Naive thymus-derived CD8-positive, alpha-beta T cell (primary cell): ENCODE measurements at regions of chr19 and their contacts with region 1.

Region 1: GRCh38 chr19:1241417-1242095 is at the start of gene ATP5F1D:
- DNase-seq: peak; percentile 79 to 93 (median 86)
- ATAC-seq: peak; percentile 64 to 66
- H3K4me3 Mint-ChIP-seq: peak within 1 kb of the TSS; percentile 79 to 96 (median 88)
- H3K27ac Mint-ChIP-seq: peak within 1 kb of the TSS; percentile 86 to 98 (median 94)
- H3K4me1 Mint-ChIP-seq: peaks cover 13 to 48% (median 44%) of the 10 kb centered on the region in 4 donors
- H3K27me3 Mint-ChIP-seq: peaks cover 2 to 9% (median 7%) of the 10 kb centered on the region in 5 donors
- polyA plus RNA-seq, gene ATP5F1D: 214 to 264 (median 262) TPM

Region 2: DNA sequence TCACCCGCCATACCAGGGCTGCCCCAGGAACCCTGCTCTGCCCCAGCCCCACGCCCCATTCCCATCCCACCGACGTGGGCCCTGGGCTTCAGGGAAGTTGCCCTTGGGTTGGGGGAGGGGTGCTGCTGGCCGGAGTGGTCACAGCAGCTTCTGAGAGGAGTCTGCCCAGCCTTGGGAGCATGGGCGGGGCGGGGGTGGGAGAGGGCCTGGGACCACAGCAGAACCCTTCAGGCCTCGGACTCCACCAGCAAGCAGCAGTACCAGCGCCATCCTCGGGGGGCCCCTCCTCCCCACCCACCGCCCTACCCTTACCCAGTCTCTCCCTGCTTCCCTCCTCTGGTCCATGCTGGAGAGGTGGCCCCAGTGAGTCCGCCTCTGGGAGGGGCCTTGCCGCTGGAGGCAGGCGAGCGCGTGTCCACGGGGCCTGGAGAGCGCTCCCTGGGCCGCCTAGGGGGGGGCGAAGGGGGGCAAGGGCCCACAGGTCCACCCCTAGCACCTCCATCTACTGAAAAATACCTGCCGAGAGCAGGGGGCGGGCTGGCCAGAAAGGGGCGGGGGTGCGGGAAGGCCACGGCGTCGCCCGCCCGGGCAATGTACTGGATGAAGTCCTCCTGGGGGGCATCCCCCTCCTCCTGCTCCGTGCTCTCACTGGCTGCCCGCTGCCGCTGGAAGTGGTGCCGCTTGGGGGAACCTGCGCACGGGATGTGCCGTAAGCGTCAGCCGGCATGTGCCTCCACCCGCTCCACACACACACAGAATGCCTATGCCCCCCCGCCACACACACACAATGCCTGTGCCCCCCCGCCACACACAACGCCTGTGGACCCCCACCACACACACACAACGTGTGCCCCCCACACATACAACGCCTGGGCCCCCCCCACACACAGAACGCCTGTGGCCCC is 10.7 kb before region 1 on chr19:
- POLR2A ChIA-PET with region 1: no interaction called
- DNase-seq: no peak
- ATAC-seq: peak in 1 of 2 donors; percentile 14
- H3K4me3 Mint-ChIP-seq: no peak overlapping the region
- H3K27ac Mint-ChIP-seq: no peak overlapping the region
- H3K4me1 Mint-ChIP-seq: no peaks in the 10 kb centered on the region
- H3K27me3 Mint-ChIP-seq: peaks cover 0 to 1% (median 0%) of the 10 kb centered on the region in 5 donors

Region 3: DNA sequence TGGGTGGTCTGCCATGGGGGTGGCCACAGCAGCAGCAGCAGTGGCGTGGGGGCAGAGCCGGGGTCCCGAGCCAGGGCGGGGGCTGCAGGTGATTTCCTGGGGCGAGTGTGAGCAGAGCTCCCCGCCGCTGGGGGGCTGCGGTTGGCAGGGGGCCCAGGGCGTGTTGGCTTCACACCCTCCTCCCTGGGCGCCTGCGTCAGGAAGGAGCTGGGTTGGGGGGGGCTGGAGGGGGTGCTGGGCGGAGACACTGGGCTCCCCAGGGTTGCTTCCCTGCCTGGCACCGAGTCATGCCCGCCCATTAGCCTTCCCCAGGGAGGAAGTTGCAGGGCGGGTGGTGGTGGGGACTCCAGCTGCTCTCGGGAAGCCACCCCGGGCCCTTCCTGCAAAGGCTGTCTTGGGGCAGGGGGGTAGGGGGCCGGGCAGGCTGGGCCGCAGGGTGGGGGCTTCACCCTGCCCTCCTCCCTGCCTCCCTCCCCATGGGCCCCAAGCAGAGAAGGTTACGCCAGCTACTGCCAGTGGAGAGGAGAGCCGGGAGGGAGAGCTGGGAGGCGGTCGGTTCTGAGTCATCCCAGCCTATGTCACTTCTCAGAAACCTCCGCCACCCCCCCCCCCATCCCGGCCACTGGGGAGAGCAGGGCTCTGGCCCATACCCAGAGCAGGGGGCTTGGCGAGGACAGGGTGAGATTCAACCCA is 11.4 kb after region 1 on chr19:
- POLR2A ChIA-PET with region 1: interaction called, 30 read pairs
- DNase-seq: peak; percentile 73 to 91 (median 80)
- ATAC-seq: peak; percentile 7 to 31
- H3K4me3 Mint-ChIP-seq: peak overlapping the region; percentile 33 to 95 (median 73)
- H3K27ac Mint-ChIP-seq: peak overlapping the region; percentile 28 to 97 (median 84)
- H3K4me1 Mint-ChIP-seq: peaks cover 15 to 40% (median 29%) of the 10 kb centered on the region in 4 donors
- H3K27me3 Mint-ChIP-seq: peaks cover 0 to 3% (median 0%) of the 10 kb centered on the region in 5 donors

Region 4: GRCh38 chr19:1260636-1261537 is 19.3 kb after region 1 on chr19:
- POLR2A ChIA-PET with region 1: interaction called, 594 read pairs
- DNase-seq: peak; percentile 91 to 99 (median 98)
- ATAC-seq: peak; percentile 71 to 83
- H3K4me3 Mint-ChIP-seq: peak overlapping the region; percentile 86 to 98 (median 90)
- H3K27ac Mint-ChIP-seq: peak overlapping the region; percentile 86 to 100 (median 99)
- H3K4me1 Mint-ChIP-seq: peaks cover 29 to 73% (median 68%) of the 10 kb centered on the region in 4 donors
- H3K27me3 Mint-ChIP-seq: no peaks in the 10 kb centered on the region

Region 5: GRCh38 chr19:1295169-1296012 is 53.8 kb after region 1 on chr19:
- POLR2A ChIA-PET with region 1: no interaction called
- DNase-seq: peak in 6 of 10 donors; percentile 33 to 65 (median 47)
- ATAC-seq: peak; percentile 67 to 73
- H3K4me3 Mint-ChIP-seq: peak overlapping the region in 4 of 10 donors; percentile 27 to 48 (median 40)
- H3K27ac Mint-ChIP-seq: peak overlapping the region in 1 of 10 donors; percentile 59
- H3K4me1 Mint-ChIP-seq: peaks cover 2 to 9% (median 4%) of the 10 kb centered on the region in 4 donors
- H3K27me3 Mint-ChIP-seq: peaks cover 3 to 36% (median 15%) of the 10 kb centered on the region in 5 donors